Activated naive CD4-positive, alpha-beta T cell treated with anti-CD3 and anti-CD28 coated beads for 36 hours (primary cell): ENCODE measurements at regions of chrX and their contacts with region 1.

Region 1: DNA sequence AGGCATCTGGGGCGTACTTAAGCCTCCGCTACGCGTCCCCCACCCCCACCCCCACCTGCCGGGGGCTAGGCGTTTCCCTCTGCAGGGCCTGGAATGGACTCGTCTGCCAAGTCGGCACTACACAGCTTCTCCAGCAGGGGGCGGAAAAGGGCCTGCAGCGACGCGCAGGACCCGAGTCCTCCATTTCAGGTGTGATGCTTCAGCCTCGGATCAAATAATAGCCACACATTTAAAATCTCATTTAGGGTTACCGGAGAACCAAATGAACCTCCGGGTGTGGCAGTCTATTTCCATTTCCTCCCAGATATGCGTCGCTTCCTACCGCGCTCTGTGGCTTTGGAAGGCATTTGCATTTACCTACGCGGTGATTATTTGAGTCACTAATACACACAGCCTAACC is 2.9 kb downstream of the PAK3 start:
- DNase-seq: peak; percentile 72
- H3K4me3 Mint-ChIP-seq: no peak overlapping the region
- H3K27ac Mint-ChIP-seq: no peak overlapping the region
- H3K4me1 Mint-ChIP-seq: peaks cover 9% of the 10 kb centered on the region
- H3K27me3 Mint-ChIP-seq: peaks cover 9% of the 10 kb centered on the region

Region 2: GRCh38 chrX:110992611-110993010 is 106.3 kb before region 1 on chrX:
- CTCF ChIA-PET with region 1: interaction called, 4 read pairs
- intact Hi-C with region 1: loop called (anchors 1 kb)
- DNase-seq: peak; percentile 19
- H3K4me3 Mint-ChIP-seq: no peak overlapping the region
- H3K27ac Mint-ChIP-seq: no peak overlapping the region
- H3K4me1 Mint-ChIP-seq: no peaks in the 10 kb centered on the region
- H3K27me3 Mint-ChIP-seq: peaks cover 1% of the 10 kb centered on the region

Region 3: GRCh38 chrX:111006116-111006515 is 92.8 kb before region 1 on chrX:
- CTCF ChIA-PET with region 1: no interaction called
- intact Hi-C with region 1: no loop called
- DNase-seq: no peak
- H3K4me3 Mint-ChIP-seq: no peak overlapping the region
- H3K27ac Mint-ChIP-seq: no peak overlapping the region
- H3K4me1 Mint-ChIP-seq: no peaks in the 10 kb centered on the region
- H3K27me3 Mint-ChIP-seq: peaks cover 3% of the 10 kb centered on the region

Region 4: GRCh38 chrX:111123125-111123524 is 24.3 kb after region 1 on chrX:
- CTCF ChIA-PET with region 1: interaction called, 4 read pairs
- intact Hi-C with region 1: loop called (anchors 2 kb)
- DNase-seq: no peak
- H3K4me3 Mint-ChIP-seq: peak overlapping the region; percentile 34
- H3K27ac Mint-ChIP-seq: peak overlapping the region; percentile 70
- H3K4me1 Mint-ChIP-seq: peaks cover 13% of the 10 kb centered on the region
- H3K27me3 Mint-ChIP-seq: no peaks in the 10 kb centered on the region

Region 5: GRCh38 chrX:111445486-111445885 is 346.6 kb after region 1 on chrX:
- CTCF ChIA-PET with region 1: interaction called, 4 read pairs
- intact Hi-C with region 1: loop called (anchors 1 kb)
- DNase-seq: no peak
- H3K4me3 Mint-ChIP-seq: no peak overlapping the region
- H3K27ac Mint-ChIP-seq: no peak overlapping the region
- H3K4me1 Mint-ChIP-seq: no peaks in the 10 kb centered on the region
- H3K27me3 Mint-ChIP-seq: peaks cover 6% of the 10 kb centered on the region